Activated naive CD4-positive, alpha-beta T cell treated with anti-CD3 and anti-CD28 coated beads, Interleukin-2, amount 10 ng/mL, durations not matched to agents 7 days and 5 days (primary cell): ENCODE measurements at regions of chr5 and their contacts with region 1.

Region 1: DNA sequence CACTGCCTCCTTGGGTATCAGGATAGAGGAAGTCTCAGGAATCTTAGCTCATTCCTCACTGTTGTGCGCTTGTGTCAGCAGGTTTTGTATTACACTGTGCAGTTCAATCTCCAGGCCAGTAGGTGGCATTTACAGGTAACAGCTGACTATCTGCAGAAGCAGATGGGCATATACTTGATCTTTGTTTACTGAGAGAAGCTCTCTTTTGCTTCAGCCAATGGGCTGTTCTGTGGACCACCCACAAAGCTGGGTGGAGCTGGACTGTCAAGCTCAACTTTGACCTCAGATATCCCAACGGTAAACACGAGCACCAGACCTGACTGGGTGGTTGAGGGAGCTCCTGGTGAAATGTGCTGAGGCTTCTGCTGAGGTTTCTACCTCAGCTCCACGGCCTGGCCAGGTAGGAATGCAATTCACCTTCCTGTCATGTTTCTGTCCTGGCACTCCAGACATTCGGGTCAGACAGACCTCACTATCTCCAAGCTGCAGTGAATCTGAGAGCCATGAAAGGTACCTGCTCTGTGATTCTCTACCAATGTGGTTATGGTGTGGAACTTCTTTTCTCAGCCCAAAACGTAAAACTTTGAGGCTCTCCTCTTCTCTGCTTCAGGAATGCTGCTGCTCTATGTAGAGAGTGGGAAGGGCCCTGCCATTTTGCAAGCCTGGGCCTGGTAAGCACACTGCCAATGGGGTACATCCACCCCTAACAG is 167.9 kb upstream of the ACTBL2 start:
- DNase-seq: peak; percentile 41
- H3K4me3 Mint-ChIP-seq: no peak overlapping the region
- H3K27ac Mint-ChIP-seq: no peak overlapping the region
- H3K4me1 Mint-ChIP-seq: no peaks in the 10 kb centered on the region
- H3K27me3 Mint-ChIP-seq: peaks cover 16% of the 10 kb centered on the region

Region 2: GRCh38 chr5:57499262-57500050 is 151.1 kb before region 1 on chr5:
- CTCF ChIA-PET with region 1: interaction called, 12 read pairs
- DNase-seq: peak; percentile 38
- H3K4me3 Mint-ChIP-seq: peak overlapping the region; percentile 68
- H3K27ac Mint-ChIP-seq: peak overlapping the region; percentile 83
- H3K4me1 Mint-ChIP-seq: peaks cover 45% of the 10 kb centered on the region
- H3K27me3 Mint-ChIP-seq: peaks cover 4% of the 10 kb centered on the region

Region 3: DNA sequence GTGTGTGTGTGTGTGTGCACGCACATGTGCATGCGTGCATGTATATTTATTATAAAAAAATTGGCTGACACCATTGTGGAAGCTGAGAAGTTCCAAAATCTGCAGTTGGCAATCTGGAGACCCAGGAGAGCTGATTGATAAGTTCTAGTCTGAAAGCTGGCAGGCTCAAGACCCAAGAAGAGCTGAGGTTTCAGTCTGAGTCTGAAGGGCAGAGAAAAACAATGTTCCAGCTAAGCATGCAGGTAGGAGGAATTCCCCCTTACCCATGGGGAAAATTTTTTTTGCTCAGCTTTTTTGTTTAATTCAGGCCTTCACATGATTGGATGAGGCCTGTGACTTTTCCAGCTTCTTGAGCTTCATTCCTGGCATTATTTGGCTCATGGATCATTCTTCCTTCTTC is 136.7 kb before region 1 on chr5:
- CTCF ChIA-PET with region 1: no interaction called
- DNase-seq: no peak
- H3K4me3 Mint-ChIP-seq: no peak overlapping the region
- H3K27ac Mint-ChIP-seq: no peak overlapping the region
- H3K4me1 Mint-ChIP-seq: no peaks in the 10 kb centered on the region
- H3K27me3 Mint-ChIP-seq: peaks cover 11% of the 10 kb centered on the region

Region 4: GRCh38 chr5:57664700-57665099 is 14.2 kb after region 1 on chr5:
- CTCF ChIA-PET with region 1: interaction called, 12 read pairs
- DNase-seq: no peak
- H3K4me3 Mint-ChIP-seq: no peak overlapping the region
- H3K27ac Mint-ChIP-seq: no peak overlapping the region
- H3K4me1 Mint-ChIP-seq: no peaks in the 10 kb centered on the region
- H3K27me3 Mint-ChIP-seq: peaks cover 14% of the 10 kb centered on the region